BJ (cell line): ENCODE measurements at regions of chr3 and their contacts with region 1.

Region 1: DNA sequence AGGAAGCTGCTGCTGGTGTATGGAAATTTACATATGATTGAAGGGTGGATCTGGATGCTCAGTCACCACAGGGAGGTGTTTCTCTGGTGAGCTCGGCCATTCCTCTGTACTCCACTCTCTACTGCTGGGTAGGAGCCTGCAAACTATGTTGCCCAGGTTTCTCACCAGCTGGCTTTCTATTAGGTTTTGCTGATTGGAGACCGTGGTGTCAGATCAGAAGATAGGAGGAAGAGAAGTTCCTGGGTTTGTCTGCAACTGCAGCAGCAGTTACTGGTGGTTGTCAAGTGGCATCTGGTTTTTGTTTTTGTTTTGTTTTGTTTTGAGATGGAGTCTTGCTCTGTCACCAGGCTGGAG is 61.7 kb downstream of the TAMM41 start:
- DNase-seq: no peak
- H3K4me3 ChIP-seq: no peak overlapping the region
- H3K27me3 ChIP-seq: no peaks in the 10 kb centered on the region
- CTCF ChIP-seq: no peak

Region 2: GRCh38 chr3:11774294-11774877 is 10.6 kb before region 1 on chr3:
- CTCF ChIA-PET with region 1: interaction called, 10 read pairs
- POLR2A ChIA-PET with region 1: no interaction called
- DNase-seq: no peak
- H3K4me3 ChIP-seq: no peak overlapping the region
- H3K27me3 ChIP-seq: no peaks in the 10 kb centered on the region
- CTCF ChIP-seq: peak; percentile 64